Esophagus muscularis mucosa (tissue), 4 donors: ENCODE measurements at regions of chr6 and their contacts with region 1.

Region 1: DNA sequence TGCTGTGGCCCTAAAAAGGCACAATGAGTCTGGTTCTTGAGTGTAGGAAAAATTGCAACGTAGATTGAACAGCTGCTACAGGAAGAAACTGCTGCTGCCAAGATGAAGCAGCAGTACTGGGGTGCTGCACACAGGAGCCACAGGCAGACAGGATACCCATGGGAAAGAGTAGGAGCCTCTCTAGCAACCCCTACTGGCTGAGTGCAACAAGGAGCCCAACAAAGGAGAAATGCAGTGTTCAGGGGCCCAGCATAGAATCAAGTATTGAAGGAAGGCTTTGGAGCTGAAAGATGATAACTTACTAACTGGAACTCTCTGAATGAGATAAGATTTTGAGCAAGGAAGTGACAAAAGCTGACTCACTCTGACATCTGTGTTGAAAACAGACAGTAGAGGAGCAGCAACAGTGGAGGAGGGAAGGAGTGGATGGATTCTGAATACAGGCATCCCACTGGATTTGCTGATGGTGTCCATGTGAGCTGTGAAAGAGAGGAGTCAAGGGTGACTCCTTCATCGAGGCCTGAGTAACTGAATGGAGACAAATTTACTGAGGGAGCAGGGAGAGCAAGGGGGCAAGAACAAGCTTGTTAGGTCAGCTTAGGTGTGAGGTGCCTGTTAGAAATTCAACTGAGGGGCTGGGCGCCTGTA is 534.7 kb upstream of the JARID2 start:
- DNase-seq: no peak
- H3K4me3 ChIP-seq: no peak overlapping the region
- H3K27ac ChIP-seq: no peak overlapping the region
- H3K4me1 ChIP-seq: peaks cover 22 to 35% (median 30%) of the 10 kb centered on the region in 4 donors
- H3K27me3 ChIP-seq: no peaks in the 10 kb centered on the region
- CTCF ChIP-seq: peak; percentile 11 to 27 (median 24)
- EP300 ChIP-seq: no peak
- POLR2A ChIP-seq: no peak

Region 2: DNA sequence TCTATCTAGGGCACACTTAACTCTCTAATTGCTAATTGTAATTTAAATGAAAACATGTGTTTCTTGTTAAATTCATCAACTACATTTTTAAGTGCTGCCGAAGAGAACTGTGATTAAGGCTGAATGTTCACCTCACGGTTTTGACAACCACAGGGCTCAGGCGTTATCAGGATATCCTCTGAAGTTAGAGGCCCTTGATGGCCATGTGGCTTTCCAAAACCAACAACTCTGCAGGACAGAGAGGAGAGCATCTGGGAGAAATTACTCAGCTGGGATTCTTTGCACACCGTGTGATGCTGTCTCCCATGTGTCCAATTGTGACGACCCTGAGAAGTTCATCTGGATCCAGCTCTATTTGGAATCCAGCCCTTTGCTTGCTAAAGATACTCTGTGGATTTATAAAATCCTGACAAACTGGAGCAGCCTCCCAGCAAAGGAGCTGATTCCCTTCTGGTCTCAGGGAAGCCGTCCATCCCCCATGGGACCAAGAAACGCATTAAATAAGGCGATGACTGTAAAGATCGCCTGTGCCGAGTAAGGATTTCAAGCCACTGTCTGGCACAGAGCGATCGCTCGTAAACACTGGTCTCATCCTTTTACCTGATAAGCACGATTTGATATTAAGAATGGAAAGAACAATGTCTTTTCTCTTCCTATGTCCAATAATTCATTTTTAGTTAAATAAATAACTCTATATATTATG is 192.5 kb before region 1 on chr6:
- intact Hi-C with region 1: no loop called
- DNase-seq: peak; percentile 78
- H3K4me3 ChIP-seq: no peak overlapping the region
- H3K27ac ChIP-seq: no peak overlapping the region
- H3K4me1 ChIP-seq: peaks cover 0 to 10% (median 5%) of the 10 kb centered on the region in 4 donors
- H3K27me3 ChIP-seq: no peaks in the 10 kb centered on the region
- CTCF ChIP-seq: no peak
- EP300 ChIP-seq: no peak
- POLR2A ChIP-seq: no peak

Region 3: GRCh38 chr6:14775528-14775927 is 64.3 kb after region 1 on chr6:
- intact Hi-C with region 1: no loop called
- DNase-seq: no peak
- H3K4me3 ChIP-seq: no peak overlapping the region
- H3K27ac ChIP-seq: no peak overlapping the region
- H3K4me1 ChIP-seq: peaks cover 0 to 5% (median 5%) of the 10 kb centered on the region in 4 donors
- H3K27me3 ChIP-seq: no peaks in the 10 kb centered on the region
- CTCF ChIP-seq: no peak
- EP300 ChIP-seq: no peak
- POLR2A ChIP-seq: no peak

Region 4: DNA sequence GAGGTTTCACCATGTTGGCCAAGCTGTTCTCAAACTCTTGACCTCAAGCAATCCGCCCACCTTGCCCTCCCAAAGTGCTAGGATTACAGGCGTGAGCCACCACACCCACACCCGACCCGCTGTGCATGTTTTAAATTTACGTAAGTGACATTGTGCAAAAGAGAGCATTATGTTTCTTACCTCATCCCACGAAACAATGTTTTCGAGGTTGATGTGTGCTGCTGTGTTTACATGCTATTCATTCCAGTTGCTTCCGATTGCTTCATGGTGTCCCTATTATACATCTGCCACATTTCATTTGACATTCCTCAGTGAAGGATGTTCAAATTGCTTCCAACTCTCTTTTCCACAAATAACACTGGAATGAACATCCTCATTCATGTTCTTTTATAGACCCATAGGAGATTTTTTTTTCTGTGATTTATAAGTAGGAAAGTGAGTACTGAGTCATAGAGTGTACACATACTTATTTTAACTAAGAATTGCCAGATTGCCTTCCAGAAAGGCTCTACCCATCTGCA is 130.8 kb after region 1 on chr6:
- intact Hi-C with region 1: loop called (anchors 10 kb)
- DNase-seq: no peak
- H3K4me3 ChIP-seq: no peak overlapping the region
- H3K27ac ChIP-seq: peak overlapping the region; percentile 28 to 72 (median 70)
- H3K4me1 ChIP-seq: peaks cover 4 to 26% (median 17%) of the 10 kb centered on the region in 4 donors
- H3K27me3 ChIP-seq: no peaks in the 10 kb centered on the region
- CTCF ChIP-seq: no peak
- EP300 ChIP-seq: peak; percentile 92
- POLR2A ChIP-seq: no peak